ENCODE measurements at regions of chr2 and their contacts with region 1.

Region 1: DNA sequence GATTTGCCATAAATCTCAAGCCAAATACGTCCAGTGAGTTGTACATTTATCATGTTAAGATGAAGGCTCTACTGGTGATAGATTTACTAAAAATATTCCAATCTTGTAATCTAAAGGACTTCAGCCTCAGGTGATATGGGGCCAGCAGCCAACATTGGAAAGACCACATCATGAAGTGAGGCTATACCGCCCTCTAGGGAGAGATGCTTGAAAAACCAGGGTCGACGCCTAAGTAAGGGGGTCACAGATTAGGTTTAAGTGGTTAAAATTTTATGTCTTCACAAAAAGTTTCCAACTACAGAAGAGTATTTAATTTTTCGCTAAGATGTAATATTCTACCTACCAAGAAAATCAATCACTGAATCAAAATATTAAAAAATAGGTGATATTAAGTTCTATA is 33.3 kb downstream of the DOCK10 start:
- DNase-seq: peak in 1 of 2 experiments; percentile 54
- H3K4me3 ChIP-seq: no peak overlapping the region
- H3K27ac ChIP-seq: no peak overlapping the region
- H3K4me1 ChIP-seq: peaks cover 0 to 3% (median 0%) of the 10 kb centered on the region in 4 experiments; a peak in 3 of 7 replicates
- H3K27me3 ChIP-seq: no peaks in the 10 kb centered on the region
- CTCF ChIP-seq: peak; percentile 36 to 70 (median 68)
- EP300 ChIP-seq: no peak
- POLR2A ChIP-seq: no peak
- RAD21 ChIP-seq: peak; percentile 80 to 85

Region 2: DNA sequence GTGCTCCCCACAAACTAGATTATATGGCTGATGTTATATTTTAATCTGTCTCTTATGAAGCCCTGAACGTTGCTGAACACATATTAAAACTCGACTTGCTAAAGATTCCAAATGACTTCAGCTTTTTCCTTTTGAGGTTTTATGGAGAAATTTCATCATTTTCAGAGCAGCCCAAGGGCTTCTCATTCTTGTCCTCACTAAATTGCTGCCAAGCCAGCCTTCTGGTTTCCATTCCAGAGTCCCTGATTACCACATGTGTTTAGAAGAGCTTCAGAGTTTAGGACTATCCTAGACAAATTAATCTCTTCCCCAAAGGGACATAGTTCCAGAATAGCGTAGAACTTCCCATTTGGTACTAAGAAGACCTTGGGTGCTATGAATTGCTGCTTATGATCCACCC is 215.0 kb before region 1 on chr2:
- CTCF ChIA-PET with region 1: no interaction called
- POLR2A ChIA-PET with region 1: no interaction called
- DNase-seq: no peak
- H3K4me3 ChIP-seq: no peak overlapping the region
- H3K27ac ChIP-seq: no peak overlapping the region
- H3K4me1 ChIP-seq: no peaks in the 10 kb centered on the region
- H3K27me3 ChIP-seq: no peaks in the 10 kb centered on the region
- CTCF ChIP-seq: no peak
- EP300 ChIP-seq: no peak
- POLR2A ChIP-seq: no peak
- RAD21 ChIP-seq: no peak

Region 3: DNA sequence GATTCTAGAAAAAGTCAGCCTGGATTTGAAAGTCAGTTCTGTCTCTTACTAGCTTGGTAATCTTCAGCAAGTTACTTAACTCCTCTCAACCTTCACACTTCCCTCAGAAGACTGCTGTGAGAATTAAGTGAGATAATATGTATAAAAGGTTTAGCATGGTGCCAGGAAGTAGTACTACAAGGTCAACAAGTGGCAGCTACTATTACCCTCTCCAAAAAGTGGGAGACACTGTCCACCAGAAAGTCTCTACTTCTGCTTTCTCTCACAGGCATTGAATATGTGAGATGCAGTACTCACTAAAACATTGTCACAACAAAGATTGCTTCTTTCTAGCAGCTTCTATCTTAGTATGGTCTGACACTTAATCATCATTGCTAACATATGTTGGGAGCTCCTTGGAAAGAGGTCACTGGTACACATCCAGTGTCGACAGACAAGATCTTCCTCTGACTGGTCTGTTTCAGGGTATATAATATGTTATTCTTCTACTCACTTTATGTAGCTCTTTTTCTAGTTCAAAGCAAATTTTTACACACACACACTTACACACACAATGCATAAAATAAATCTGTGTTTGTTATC is 14.6 kb before region 1 on chr2:
- CTCF ChIA-PET with region 1: interaction called, 45 read pairs
- POLR2A ChIA-PET with region 1: no interaction called
- DNase-seq: no peak
- H3K4me3 ChIP-seq: no peak overlapping the region
- H3K27ac ChIP-seq: no peak overlapping the region
- H3K4me1 ChIP-seq: no peaks in the 10 kb centered on the region
- H3K27me3 ChIP-seq: no peaks in the 10 kb centered on the region
- CTCF ChIP-seq: no peak
- EP300 ChIP-seq: no peak
- POLR2A ChIP-seq: no peak
- RAD21 ChIP-seq: no peak

Region 4: GRCh38 chr2:226185616-226186211 is 1176.8 kb after region 1 on chr2:
- CTCF ChIA-PET with region 1: no interaction called
- POLR2A ChIA-PET with region 1: no interaction called
- DNase-seq: no peak
- H3K4me3 ChIP-seq: no peak overlapping the region
- H3K27ac ChIP-seq: no peak overlapping the region
- H3K4me1 ChIP-seq: peaks cover 0 to 5% (median 2%) of the 10 kb centered on the region in 4 experiments; a peak in 2 of 7 replicates
- H3K27me3 ChIP-seq: no peaks in the 10 kb centered on the region
- CTCF ChIP-seq: no peak
- EP300 ChIP-seq: no peak
- POLR2A ChIP-seq: no peak
- RAD21 ChIP-seq: no peak

Measured in H1 (cell line).